ENCODE measurements at regions of chr15 and their contacts with region 1.

Region 1: GRCh38 chr15:58770857-58771620 is at the start of gene MINDY2:
- DNase-seq: peak; percentile 97 to 98
- ATAC-seq: peak; percentile 91 to 92
- H3K4me3 ChIP-seq: peak within 1 kb of the TSS; percentile 70 to 97 (median 92)
- H3K27ac ChIP-seq: peak within 1 kb of the TSS; percentile 92 to 99 (median 98)
- H3K4me1 ChIP-seq: peaks cover 40 to 44% of the 10 kb centered on the region in 2 donors
- H3K27me3 ChIP-seq: no peaks in the 10 kb centered on the region
- CTCF ChIP-seq: peak in 1 of 5 experiments; percentile 19
- POLR2A ChIP-seq: peak; percentile 87 to 96
- total RNA-seq, gene MINDY2: 7.1 to 22.0 (median 9.8) TPM

Region 2: DNA sequence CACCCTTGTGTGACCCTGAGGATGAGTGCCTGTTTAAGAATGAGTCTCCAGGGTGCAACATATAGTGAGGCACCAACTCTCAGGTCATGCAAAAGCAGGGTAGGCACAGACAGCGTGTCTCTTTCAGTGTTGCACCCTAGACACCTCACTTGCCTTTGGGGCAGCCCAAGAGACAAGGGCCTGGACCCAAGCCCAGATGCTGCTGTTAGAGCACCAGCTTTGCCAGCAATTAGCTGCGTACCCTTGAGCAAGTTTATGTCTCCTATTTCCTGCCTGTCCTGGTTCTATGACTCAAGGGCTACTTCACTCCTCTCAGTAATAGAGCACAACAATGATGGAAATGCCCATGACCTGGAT is 510.1 kb before region 1 on chr15:
- in situ Hi-C with region 1: no loop called
- intact Hi-C with region 1: loop called (anchors 5 kb)
- DNase-seq: peak; percentile 74 to 89
- ATAC-seq: peak; percentile 81 to 82
- H3K4me3 ChIP-seq: no peak overlapping the region
- H3K27ac ChIP-seq: peak overlapping the region; percentile 90 to 96 (median 94)
- H3K4me1 ChIP-seq: peaks cover 40 to 48% of the 10 kb centered on the region in 2 donors
- H3K27me3 ChIP-seq: no peaks in the 10 kb centered on the region
- CTCF ChIP-seq: peak in 1 of 5 experiments; percentile 0
- POLR2A ChIP-seq: no peak

Region 3: DNA sequence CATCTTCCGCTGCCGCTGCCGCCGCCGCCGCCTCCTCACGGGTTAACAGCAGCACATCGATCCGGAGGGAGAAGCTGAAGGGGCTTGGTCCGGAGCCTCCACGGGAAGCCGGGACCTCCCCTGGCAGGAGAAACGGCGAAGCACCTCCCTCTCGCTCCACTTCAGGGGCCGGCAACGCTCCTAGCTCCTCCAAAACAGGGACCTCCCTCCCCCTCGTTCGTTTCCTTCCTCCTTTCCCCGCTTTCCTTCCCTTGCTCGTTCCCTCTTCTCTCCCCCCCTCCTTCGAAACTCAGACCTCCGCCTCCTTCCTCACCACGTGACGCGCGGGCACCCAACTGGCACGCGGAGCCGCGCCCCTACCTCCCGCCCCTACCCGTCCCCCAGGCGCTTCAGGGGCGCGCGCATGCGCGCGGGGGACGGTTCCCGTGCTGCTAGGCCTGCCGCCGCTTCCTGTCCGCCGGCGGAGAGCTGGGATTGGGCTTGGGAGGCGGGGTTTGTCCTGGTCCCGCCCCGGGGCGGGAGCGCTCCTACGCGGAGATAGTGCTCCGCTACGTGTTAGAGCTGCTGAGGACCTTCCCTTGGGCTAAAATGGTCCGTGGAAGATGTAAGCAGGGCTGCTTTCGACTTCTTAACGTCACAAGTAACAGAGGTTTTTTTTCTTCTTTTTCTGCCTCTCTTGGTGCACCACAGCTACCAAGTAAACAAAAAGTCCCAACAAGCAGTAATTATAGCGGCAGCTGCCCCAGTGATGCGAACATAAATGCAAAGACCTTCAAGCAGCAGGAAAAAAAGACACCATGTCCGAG is 21.3 kb before region 1 on chr15 and contains the start of gene ADAM10:
- in situ Hi-C with region 1: no loop called
- intact Hi-C with region 1: loop called (anchors 1 kb)
- DNase-seq: peak; percentile 98 to 99
- ATAC-seq: peak; percentile 94 to 95
- H3K4me3 ChIP-seq: peak within 1 kb of the TSS; percentile 75 to 98 (median 85)
- H3K27ac ChIP-seq: peak within 1 kb of the TSS; percentile 89 to 100 (median 96)
- H3K4me1 ChIP-seq: peaks cover 18 to 35% of the 10 kb centered on the region in 2 donors
- H3K27me3 ChIP-seq: no peaks in the 10 kb centered on the region
- CTCF ChIP-seq: peak in 1 of 5 experiments; percentile 10
- POLR2A ChIP-seq: peak; percentile 89 to 97
- total RNA-seq, gene ADAM10: 20.1 to 42.5 (median 33.4) TPM

Region 4: GRCh38 chr15:58987489-58988005 is 216.5 kb after region 1 on chr15 and contains the start of gene RNF111:
- in situ Hi-C with region 1: no loop called
- intact Hi-C with region 1: loop called (anchors 5 kb)
- DNase-seq: peak; percentile 87 to 90
- ATAC-seq: peak; percentile 99
- H3K4me3 ChIP-seq: peak within 1 kb of the TSS; percentile 88 to 97 (median 92)
- H3K27ac ChIP-seq: peak within 1 kb of the TSS; percentile 91 to 98 (median 94)
- H3K4me1 ChIP-seq: peaks cover 16 to 35% of the 10 kb centered on the region in 2 donors
- H3K27me3 ChIP-seq: no peaks in the 10 kb centered on the region
- CTCF ChIP-seq: no peak
- POLR2A ChIP-seq: peak; percentile 82 to 85
- total RNA-seq, gene RNF111: 14.5 to 18.4 (median 15.8) TPM

Region 5: DNA sequence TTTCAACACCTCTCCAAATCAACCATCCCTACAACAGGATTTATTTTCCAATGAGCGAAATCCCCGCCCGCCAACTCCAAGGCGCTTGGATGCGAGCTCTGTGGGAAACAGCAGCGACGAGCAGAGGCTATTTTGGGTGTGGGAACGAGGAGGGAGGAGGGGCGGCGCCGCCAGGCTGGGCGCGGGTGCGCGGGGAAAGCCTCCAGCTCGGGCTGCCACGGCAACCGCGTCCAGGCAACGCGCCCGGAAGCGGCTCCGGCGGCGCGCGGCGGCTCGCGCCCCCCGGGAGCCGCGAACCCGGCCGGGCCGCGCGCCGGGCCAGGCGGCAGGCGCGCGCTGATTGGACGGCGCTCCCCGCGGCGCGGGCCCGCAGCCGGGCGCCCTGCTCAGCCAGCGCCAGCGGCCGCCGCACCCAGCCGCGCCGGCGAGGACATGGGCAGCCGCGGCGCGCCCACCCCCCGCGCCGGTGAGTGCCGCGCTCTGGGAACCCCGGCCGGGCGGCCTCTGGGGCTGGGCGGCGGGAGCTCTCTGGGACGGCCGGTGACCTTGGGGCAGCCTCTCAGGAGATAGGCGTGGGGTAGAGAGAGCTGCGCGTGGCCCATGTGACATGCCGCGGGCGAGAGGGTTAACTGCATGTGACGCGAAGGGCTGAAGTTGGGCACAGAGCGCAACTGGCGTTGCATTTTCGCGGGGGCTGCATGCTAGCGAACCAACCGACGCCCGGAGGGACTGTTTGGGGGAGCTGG is 667.0 kb after region 1 on chr15 and contains the start of gene FAM81A:
- in situ Hi-C with region 1: no loop called
- intact Hi-C with region 1: loop called (anchors 5 kb)
- DNase-seq: peak; percentile 54 to 74
- ATAC-seq: peak; percentile 95 to 96
- H3K4me3 ChIP-seq: peak within 1 kb of the TSS; percentile 50 to 71 (median 56)
- H3K27ac ChIP-seq: peak within 1 kb of the TSS in 1 of 4 donors; percentile 17
- H3K4me1 ChIP-seq: peaks cover 6 to 11% of the 10 kb centered on the region in 2 donors
- H3K27me3 ChIP-seq: no peaks in the 10 kb centered on the region
- CTCF ChIP-seq: no peak
- POLR2A ChIP-seq: no peak
- total RNA-seq, gene FAM81A: 0.07 to 0.10 TPM in 2 of 4 donors, not detected in the others